ENCODE measurements at regions of chr3 and their contacts with region 1.

Region 1: DNA sequence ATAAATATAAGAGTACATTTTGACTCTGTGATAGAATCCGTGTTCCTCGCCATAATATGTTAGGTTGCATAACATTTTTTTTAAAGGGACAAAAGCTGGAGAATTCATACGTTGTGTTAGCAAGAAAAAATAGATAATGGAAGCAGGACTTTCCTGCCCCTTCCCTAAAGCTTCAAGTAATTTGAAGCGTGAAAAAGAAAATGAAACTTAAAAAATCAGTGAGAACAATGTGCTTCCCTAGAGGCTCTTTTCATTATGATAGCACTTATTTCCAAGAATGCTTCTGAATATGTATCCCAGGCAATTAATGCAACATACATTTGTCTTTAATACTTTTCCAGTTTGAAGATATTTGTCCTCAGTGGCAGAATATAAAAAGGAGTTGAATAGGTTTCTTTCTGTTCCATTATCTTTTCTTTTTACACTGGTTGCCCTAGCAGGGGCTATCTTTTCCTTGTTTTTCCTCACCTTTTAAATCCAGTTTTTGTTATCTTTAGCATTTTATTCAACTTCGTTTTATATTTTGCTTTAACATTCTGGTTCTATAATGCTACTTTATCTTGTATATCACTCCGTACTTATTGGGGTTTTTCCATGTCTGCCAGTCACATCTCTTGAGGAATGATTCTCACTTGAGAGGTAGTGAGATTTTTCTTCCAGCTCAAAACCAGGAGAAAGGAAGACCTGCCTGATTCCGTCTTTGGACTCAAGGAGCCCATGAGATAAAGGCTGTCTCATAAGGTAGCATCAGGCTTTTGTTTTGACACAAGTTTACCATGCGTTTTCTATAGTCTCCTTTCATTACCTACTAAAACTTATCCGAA is 113.8 kb downstream of the MBNL1 start:
- DNase-seq: no peak
- CTCF ChIP-seq: no peak

Region 2: DNA sequence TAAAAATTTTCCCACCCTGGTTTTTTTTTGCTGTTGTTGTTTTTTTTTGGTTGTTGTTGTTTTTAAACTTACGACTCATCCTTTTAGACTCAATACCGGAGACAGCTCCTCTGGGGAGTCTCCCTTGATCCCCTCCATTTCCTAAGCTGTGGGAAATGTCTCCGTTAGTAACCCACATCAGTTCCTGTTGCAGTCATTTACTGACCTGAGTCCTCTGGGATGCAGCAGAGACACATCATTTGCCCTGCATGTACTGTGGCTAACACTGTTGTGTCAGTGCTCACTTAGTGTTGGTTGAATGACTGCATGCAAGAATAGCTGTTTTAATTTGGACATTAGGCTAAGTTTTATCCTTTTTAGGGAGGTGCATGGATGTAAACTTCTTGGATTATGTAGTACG is 30.0 kb before region 1 on chr3:
- CTCF ChIA-PET with region 1: no interaction called
- POLR2A ChIA-PET with region 1: no interaction called
- DNase-seq: no peak
- CTCF ChIP-seq: no peak

Region 3: GRCh38 chr3:152395764-152396163 is 13.2 kb after region 1 on chr3:
- CTCF ChIA-PET with region 1: interaction called, 14 read pairs
- POLR2A ChIA-PET with region 1: no interaction called
- DNase-seq: no peak
- CTCF ChIP-seq: no peak

Region 4: GRCh38 chr3:152656214-152656971 is 273.9 kb after region 1 on chr3:
- CTCF ChIA-PET with region 1: no interaction called
- POLR2A ChIA-PET with region 1: no interaction called
- DNase-seq: no peak
- CTCF ChIP-seq: no peak

Measured in GM10248 (cell line).